Sciatic nerve (tissue), 2 donors: ENCODE measurements at regions of chr1 and their contacts with region 1.

Region 1: DNA sequence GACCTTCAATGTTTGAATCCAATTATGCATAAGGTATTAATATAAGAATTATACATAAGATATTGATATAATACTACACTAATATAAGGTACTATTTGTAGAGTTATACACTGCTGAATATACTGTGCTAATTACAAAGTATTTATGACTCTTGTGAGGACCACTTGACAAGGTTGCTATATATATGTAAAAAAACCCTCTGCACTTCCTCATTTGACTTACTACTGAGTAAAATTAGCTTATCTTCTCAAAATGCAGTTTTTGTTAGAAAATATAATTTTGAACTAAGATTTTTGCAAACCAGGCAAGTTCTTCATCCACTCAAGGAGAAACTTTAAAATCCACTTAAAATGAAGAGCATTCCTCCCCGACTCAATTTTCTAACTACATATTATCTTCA is 8.5 kb downstream of the SIKE1 start:
- DNase-seq: no peak
- ATAC-seq: no peak

Region 2: GRCh38 chr1:114511032-114511785 is 260.8 kb before region 1 on chr1 and contains the start of gene TRIM33:
- intact Hi-C with region 1: loop called (anchors 5 kb)
- DNase-seq: peak; percentile 94
- ATAC-seq: peak; percentile 98
- total RNA-seq, gene TRIM33: 41.4 TPM

Region 3: GRCh38 chr1:114558544-114558943 is 213.4 kb before region 1 on chr1:
- intact Hi-C with region 1: no loop called
- DNase-seq: no peak
- ATAC-seq: no peak